ENCODE measurements at regions of chr1 and their contacts with region 1.

Region 1: DNA sequence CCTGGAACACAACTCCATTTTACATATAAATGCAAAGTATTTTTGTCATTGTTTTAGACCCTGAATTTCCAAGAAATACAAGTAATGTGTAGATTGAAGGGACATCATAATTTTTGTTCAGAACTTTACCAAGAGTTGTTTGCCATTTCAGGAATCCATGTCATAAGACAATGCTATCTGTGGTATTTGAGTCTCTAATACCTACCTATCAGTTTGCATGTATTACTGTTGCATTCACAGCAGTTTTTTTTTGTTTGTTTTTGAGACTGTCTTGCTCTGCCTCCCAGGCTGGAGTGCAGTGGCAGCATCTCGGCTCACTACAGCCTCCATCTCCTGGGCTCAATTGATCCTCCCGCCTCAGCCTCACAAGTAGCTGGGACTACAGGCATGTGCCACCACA is 17.1 kb downstream of the MPZ start:
- DNase-seq: no peak
- H3K4me3 ChIP-seq: no peak overlapping the region
- H3K27ac ChIP-seq: no peak overlapping the region
- H3K27me3 ChIP-seq: no peaks in the 10 kb centered on the region
- CTCF ChIP-seq: no peak

Region 2: GRCh38 chr1:161111527-161111926 is 181.1 kb before region 1 on chr1:
- CTCF ChIA-PET with region 1: no interaction called
- POLR2A ChIA-PET with region 1: no interaction called
- DNase-seq: no peak
- H3K4me3 ChIP-seq: no peak overlapping the region
- H3K27ac ChIP-seq: no peak overlapping the region
- H3K27me3 ChIP-seq: no peaks in the 10 kb centered on the region
- CTCF ChIP-seq: no peak

Region 3: GRCh38 chr1:161250829-161251228 is 41.8 kb before region 1 on chr1:
- CTCF ChIA-PET with region 1: interaction called, 12 read pairs
- POLR2A ChIA-PET with region 1: no interaction called
- DNase-seq: no peak
- H3K4me3 ChIP-seq: no peak overlapping the region
- H3K27ac ChIP-seq: no peak overlapping the region
- H3K27me3 ChIP-seq: peaks cover 7% of the 10 kb centered on the region
- CTCF ChIP-seq: no peak

Region 4: DNA sequence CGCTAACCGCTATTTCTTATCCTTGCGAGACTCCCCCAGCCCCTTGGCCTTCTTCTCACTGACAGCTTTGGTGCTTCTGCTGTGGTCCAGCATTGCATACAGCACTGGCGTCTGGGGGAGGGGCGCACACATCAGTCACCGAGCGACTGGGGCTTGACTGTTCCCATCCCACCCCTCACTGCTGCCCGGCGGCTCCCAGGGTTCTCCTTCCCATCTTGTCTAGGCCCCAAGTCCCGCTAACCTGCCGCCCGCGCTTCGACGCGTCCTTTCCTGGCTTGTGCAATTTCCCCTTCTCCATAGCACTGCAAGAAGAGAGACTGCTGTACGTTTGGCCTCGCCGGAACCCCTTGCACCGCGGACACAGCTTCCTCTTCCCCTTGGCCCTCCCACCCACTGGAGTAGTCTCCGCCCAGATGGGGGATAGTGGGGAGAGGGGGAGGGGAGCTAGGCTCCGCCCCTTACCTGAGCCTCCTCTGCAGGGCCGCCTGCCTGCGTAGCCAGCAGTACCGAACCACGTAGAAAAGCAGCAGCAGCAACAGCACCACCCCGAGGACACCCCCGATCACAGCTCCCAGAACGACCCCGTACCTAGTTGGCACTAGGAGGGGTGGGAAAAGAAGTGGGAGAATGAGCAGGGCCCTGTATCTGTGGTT is 13.4 kb after region 1 on chr1:
- CTCF ChIA-PET with region 1: interaction called, 13 read pairs
- POLR2A ChIA-PET with region 1: no interaction called
- DNase-seq: no peak
- H3K4me3 ChIP-seq: peak overlapping the region; percentile 68
- H3K27ac ChIP-seq: no peak overlapping the region
- H3K27me3 ChIP-seq: peaks cover 10% of the 10 kb centered on the region
- CTCF ChIP-seq: peak; percentile 10; the same call in 1 of the 2 replicates

Region 5: GRCh38 chr1:161389691-161390558 is 97.3 kb after region 1 on chr1:
- CTCF ChIA-PET with region 1: no interaction called
- POLR2A ChIA-PET with region 1: no interaction called
- DNase-seq: peak; percentile 96
- H3K4me3 ChIP-seq: peak overlapping the region; percentile 83
- H3K27ac ChIP-seq: peak overlapping the region; percentile 98
- H3K27me3 ChIP-seq: no peaks in the 10 kb centered on the region
- CTCF ChIP-seq: no peak

Region 6: GRCh38 chr1:161499099-161500039 is 206.7 kb after region 1 on chr1:
- CTCF ChIA-PET with region 1: no interaction called
- POLR2A ChIA-PET with region 1: no interaction called
- DNase-seq: no peak
- H3K4me3 ChIP-seq: no peak overlapping the region
- H3K27ac ChIP-seq: no peak overlapping the region
- H3K27me3 ChIP-seq: peaks cover 2% of the 10 kb centered on the region
- CTCF ChIP-seq: no peak

Measured in AG04450 (cell line).